ENCODE measurements at regions of chr6 and their contacts with region 1.

Region 1: DNA sequence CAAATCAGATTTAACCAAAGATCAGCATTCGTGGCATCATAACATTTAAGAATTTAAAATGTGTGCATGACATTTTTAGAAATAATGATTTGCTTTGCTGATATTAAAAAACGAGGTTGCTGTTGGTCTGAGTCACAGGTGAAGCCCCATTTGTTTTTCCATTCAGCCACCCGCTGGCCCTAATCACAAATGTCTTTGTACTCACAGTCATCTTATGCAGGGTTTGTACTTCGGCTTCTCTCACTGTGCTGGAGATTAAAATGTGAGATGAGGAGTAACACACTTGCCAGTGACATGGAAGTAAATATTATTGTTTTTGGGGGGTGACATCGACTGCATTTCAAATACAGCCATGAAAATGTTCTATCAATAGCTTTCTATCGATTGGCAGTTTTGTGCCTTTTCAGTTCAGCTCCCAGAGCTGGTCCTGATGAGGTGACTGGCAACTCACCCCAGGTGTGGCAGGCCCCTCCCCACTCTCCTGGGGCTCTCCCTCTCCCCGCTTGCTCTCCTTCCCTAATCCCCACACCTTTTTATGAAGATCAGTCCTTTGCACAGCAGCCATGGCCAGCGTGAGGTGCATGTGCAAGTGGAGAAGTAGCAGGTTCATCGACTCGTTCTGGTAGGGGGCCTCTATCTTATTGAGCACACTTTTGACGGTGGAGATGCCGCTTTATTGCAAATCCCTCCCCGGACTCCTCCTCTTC is 58.8 kb upstream of the FUCA2 start:
- DNase-seq: no peak
- ATAC-seq: no peak
- H3K4me3 ChIP-seq: no peak overlapping the region
- H3K27ac ChIP-seq: no peak overlapping the region
- H3K4me1 ChIP-seq: peaks cover 0 to 6% (median 0%) of the 10 kb centered on the region in 9 donors
- H3K27me3 ChIP-seq: no peaks in the 10 kb centered on the region
- CTCF ChIP-seq: no peak

Region 2: DNA sequence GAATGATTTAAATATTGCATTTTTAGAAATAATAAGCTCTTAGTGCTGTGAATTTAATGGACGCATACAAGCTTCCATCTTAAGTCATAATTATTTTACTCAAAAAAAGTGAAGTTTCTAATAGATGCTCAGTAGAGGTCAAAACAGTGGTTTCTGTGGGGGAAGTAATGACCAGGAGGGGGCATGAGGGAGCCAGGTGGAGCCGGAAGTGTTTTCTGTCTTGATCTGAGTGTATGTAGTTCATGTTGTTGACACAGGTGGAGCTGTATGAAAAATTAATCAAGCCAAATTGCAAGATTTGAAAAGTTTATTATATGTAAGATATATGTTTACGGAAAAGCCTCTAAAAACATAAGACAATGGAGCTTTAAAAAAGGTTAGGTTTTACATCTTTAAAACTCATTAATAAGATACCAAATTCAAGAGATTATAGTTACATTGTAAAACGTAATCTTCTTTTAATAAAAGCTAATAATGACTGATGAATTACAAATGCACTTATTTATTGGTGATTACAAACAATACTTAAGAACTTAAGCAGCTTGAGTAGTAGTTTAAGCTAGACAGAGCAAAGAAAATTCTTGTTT is 369.8 kb after region 1 on chr6:
- intact Hi-C with region 1: loop called in 1 of 10 experiments (anchors 5 kb)
- DNase-seq: no peak
- ATAC-seq: peak in 1 of 8 donors; percentile 39
- H3K4me3 ChIP-seq: no peak overlapping the region
- H3K27ac ChIP-seq: no peak overlapping the region
- H3K4me1 ChIP-seq: peaks cover 0 to 8% (median 0%) of the 10 kb centered on the region in 9 donors
- H3K27me3 ChIP-seq: no peaks in the 10 kb centered on the region
- CTCF ChIP-seq: peak in 8 of 9 donors; percentile 40 to 67 (median 58)

Measured in heart right ventricle (tissue), 16 donors.